ENCODE measurements at regions of chr11 and their contacts with region 1.

Region 1: DNA sequence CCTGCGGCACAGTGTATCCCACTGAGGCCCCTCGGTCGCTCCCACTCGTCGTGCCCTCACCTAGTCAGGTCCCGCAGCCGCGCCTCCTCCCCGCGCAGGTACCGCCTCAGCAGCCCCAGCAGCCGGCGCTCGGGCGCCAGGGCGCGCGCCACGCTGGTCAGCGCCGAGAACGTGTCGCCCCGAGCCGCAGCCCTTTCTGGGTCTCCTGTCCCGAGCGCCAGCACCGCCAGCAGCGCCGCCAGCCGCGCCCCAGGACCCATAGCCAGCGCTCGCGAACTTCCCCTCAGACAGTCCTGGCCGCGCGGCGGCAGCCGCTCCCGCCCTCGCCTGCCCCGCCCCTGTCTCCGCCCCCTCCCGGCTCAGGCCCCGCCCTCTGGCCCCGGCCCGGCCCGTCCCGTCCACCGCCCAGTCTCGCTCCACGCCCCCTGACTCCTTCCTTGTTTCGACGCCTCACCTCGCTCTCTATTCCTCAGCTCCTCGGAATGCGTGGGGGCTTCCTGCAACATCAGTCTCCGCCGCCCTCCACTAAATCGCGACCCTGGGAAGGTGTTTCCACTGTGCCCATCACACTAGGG is at the start of gene P4HA3:
- DNase-seq: peak; percentile 31 to 92
- H3K4me3 ChIP-seq: peak within 1 kb of the TSS; percentile 13 to 59 (median 40)
- H3K27ac ChIP-seq: no peak within 1 kb of the TSS
- H3K4me1 ChIP-seq: peaks cover 0 to 8% (median 3%) of the 10 kb centered on the region in 4 experiments; a peak in 3 of 7 replicates
- H3K27me3 ChIP-seq: peaks cover 8 to 24% (median 16%) of the 10 kb centered on the region in 4 experiments
- CTCF ChIP-seq: peak in 1 of 3 experiments; percentile 17; a peak in 1 of 4 replicates
- EP300 ChIP-seq: no peak
- POLR2A ChIP-seq: no peak
- RAD21 ChIP-seq: peak in 1 of 2 experiments; percentile 19; a peak in 2 of 4 replicates
- total RNA-seq, gene P4HA3: not detected in 2 replicates

Region 2: DNA sequence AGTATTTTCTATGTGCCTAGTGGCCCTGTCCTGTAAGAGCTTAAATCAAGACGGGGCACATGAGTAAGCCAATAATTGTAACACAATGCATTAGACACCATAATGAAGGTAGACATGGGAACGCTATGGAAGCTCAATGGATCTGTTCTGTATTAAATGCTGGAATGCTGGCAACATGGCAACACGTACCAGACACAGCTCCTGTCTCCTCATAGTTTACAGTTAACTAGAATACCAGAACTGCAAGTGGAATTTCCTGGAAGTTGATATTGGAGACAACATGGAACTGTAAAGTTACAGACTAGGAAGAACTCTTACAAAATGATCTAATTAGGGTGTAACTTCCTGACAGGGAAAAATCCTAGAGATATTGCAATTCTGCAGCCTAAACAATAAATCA is 12.4 kb before region 1 on chr11:
- CTCF ChIA-PET with region 1: interaction called, 16 read pairs
- POLR2A ChIA-PET with region 1: no interaction called
- DNase-seq: no peak
- H3K4me3 ChIP-seq: no peak overlapping the region
- H3K27ac ChIP-seq: no peak overlapping the region
- H3K4me1 ChIP-seq: no peaks in the 10 kb centered on the region
- H3K27me3 ChIP-seq: no peaks in the 10 kb centered on the region
- CTCF ChIP-seq: no peak
- EP300 ChIP-seq: no peak
- POLR2A ChIP-seq: no peak
- RAD21 ChIP-seq: no peak

Region 3: GRCh38 chr11:74321487-74322188 is 10.2 kb after region 1 on chr11:
- CTCF ChIA-PET with region 1: interaction called, 12 read pairs
- POLR2A ChIA-PET with region 1: no interaction called
- DNase-seq: peak in 1 of 2 experiments; percentile 58
- H3K4me3 ChIP-seq: no peak overlapping the region
- H3K27ac ChIP-seq: no peak overlapping the region
- H3K4me1 ChIP-seq: no peaks in the 10 kb centered on the region
- H3K27me3 ChIP-seq: no peaks in the 10 kb centered on the region
- CTCF ChIP-seq: peak; percentile 54 to 83 (median 66)
- EP300 ChIP-seq: no peak
- POLR2A ChIP-seq: no peak
- RAD21 ChIP-seq: peak; percentile 67 to 70